Activated T-helper 1 cell treated with anti-CD3 and anti-CD28 coated beads, Interleukin-12 subunit alpha, Interleukin-12 subunit beta, Interleukin-2, Interleukin-4 antibody, amounts not matched to agents 30 ng/mL and 10 ng/mL and 1 ng/mL, durations not matched to agents 14 hours and 24 hours and 36 hours (primary cell): ENCODE measurements at regions of chr1 and their contacts with region 1.

Region 1: GRCh38 chr1:110338886-110339406 is at the start of gene RBM15:
- DNase-seq: peak; percentile 98
- H3K4me3 Mint-ChIP-seq: no peak within 1 kb of the TSS
- H3K27ac Mint-ChIP-seq: peak within 1 kb of the TSS; percentile 98
- H3K4me1 Mint-ChIP-seq: peaks cover 54% of the 10 kb centered on the region
- H3K27me3 Mint-ChIP-seq: no peaks in the 10 kb centered on the region
- total RNA-seq, gene RBM15: 58.5 and 59.0 TPM in 2 replicates

Region 2: GRCh38 chr1:108691942-108692723 is 1646.8 kb before region 1 on chr1 and contains the start of gene PRPF38B:
- intact Hi-C with region 1: loop called (anchors 2 kb)
- DNase-seq: peak; percentile 92
- H3K4me3 Mint-ChIP-seq: peak within 1 kb of the TSS; percentile 100
- H3K27ac Mint-ChIP-seq: peak within 1 kb of the TSS; percentile 100
- H3K4me1 Mint-ChIP-seq: peaks cover 44% of the 10 kb centered on the region
- H3K27me3 Mint-ChIP-seq: peaks cover 9% of the 10 kb centered on the region
- total RNA-seq, gene PRPF38B: 94.4 and 99.8 TPM in 2 replicates

Region 3: DNA sequence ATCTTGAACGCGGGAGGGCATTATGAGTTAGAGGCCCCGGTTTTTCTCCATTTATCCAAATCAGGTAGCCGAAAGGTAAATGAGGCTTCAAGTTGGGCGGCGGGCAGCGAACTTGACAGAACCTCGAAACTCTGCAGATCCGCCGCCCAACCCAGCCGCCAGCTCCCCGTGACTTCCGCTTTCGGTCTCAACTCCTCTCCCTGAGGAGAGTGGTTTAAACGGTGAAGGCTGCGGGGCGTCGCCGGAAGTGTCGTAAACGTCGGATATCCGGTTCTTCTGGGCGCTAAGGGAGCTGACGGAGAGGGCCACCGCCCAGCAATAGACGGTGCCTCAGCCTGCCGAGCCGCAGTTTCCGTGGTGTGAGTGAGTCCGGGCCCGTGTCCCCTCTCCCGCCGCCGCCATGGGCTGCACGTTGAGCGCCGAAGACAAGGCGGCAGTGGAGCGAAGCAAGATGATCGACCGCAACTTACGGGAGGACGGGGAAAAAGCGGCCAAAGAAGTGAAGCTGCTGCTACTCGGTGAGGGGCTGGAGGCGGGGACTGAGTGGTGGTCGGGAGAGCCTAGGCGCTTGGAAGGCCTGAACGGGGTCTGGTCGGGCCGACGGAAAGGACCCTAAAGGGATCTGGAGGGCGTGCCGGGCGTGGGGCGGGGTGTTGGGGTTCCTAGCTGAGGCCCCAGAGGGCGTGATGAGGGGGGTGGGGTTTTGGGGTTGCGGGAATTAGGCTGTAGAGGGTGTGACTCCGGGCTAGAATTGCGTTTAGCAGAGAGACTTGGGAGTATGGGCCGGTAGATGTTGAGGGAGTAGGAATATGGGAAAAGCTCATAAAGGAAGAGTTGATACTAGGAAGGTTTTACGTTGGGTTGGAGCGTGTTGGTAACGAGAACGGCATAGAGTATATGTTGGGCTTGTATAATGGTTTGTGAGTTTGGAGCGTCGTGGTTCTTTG is 790.4 kb before region 1 on chr1 and contains the start of gene GNAI3:
- intact Hi-C with region 1: loop called (anchors 1 kb)
- DNase-seq: peak; percentile 96
- H3K4me3 Mint-ChIP-seq: peak within 1 kb of the TSS; percentile 94
- H3K27ac Mint-ChIP-seq: peak within 1 kb of the TSS; percentile 96
- H3K4me1 Mint-ChIP-seq: peaks cover 48% of the 10 kb centered on the region
- H3K27me3 Mint-ChIP-seq: no peaks in the 10 kb centered on the region
- total RNA-seq, gene GNAI3: 8.4 and 8.9 TPM in 2 replicates

Region 4: DNA sequence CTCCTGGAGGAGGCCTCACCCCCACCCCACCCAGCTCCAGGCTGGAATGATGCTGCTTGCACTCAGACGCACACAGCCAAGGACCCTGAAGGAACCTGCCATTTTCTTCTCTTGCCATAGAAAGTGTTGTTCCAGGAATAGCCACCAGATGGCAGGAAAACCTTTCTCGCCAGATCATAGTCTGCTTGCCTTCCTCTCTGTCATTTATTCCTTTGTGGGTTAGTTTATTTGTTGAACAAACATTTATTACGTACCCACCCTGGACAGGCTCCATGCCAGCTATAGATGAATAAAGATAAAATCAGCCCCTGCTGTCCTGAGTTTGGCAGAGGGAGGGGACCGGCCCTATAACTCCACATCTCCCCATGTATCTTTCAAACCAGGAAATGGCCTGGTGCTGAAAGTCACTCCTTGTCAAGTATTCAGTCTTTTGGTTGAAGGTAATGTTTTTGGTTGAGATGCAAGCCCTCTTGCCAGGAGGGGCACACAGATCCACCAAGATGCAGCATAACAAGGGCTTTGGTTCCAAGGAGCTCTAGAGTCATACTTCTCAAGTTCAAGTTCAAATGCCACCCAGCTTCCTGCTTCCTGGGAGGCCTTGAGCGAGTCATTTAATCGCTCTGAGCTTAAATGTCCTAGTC is 135.8 kb before region 1 on chr1:
- intact Hi-C with region 1: loop called (anchors 2 kb)
- DNase-seq: peak; percentile 67
- H3K4me3 Mint-ChIP-seq: no peak overlapping the region
- H3K27ac Mint-ChIP-seq: peak overlapping the region; percentile 88
- H3K4me1 Mint-ChIP-seq: peaks cover 15% of the 10 kb centered on the region
- H3K27me3 Mint-ChIP-seq: peaks cover 2% of the 10 kb centered on the region

Region 5: GRCh38 chr1:110407260-110408210 is 68.6 kb after region 1 on chr1 and contains the start of gene LAMTOR5:
- intact Hi-C with region 1: loop called (anchors 1 kb)
- DNase-seq: peak; percentile 90
- H3K4me3 Mint-ChIP-seq: peak within 1 kb of the TSS; percentile 100
- H3K27ac Mint-ChIP-seq: peak within 1 kb of the TSS; percentile 100
- H3K4me1 Mint-ChIP-seq: peaks cover 22% of the 10 kb centered on the region
- H3K27me3 Mint-ChIP-seq: no peaks in the 10 kb centered on the region
- total RNA-seq, gene LAMTOR5: 163 and 184 TPM in 2 replicates

Region 6: GRCh38 chr1:110674337-110675059 is 335.6 kb after region 1 on chr1 and contains the start of gene KCNA3:
- intact Hi-C with region 1: loop called (anchors 2 kb)
- DNase-seq: peak; percentile 68
- H3K4me3 Mint-ChIP-seq: peak within 1 kb of the TSS; percentile 100
- H3K27ac Mint-ChIP-seq: peak within 1 kb of the TSS; percentile 92
- H3K4me1 Mint-ChIP-seq: peaks cover 67% of the 10 kb centered on the region
- H3K27me3 Mint-ChIP-seq: no peaks in the 10 kb centered on the region
- total RNA-seq, gene KCNA3: 38.1 and 42.2 TPM in 2 replicates

Region 7: DNA sequence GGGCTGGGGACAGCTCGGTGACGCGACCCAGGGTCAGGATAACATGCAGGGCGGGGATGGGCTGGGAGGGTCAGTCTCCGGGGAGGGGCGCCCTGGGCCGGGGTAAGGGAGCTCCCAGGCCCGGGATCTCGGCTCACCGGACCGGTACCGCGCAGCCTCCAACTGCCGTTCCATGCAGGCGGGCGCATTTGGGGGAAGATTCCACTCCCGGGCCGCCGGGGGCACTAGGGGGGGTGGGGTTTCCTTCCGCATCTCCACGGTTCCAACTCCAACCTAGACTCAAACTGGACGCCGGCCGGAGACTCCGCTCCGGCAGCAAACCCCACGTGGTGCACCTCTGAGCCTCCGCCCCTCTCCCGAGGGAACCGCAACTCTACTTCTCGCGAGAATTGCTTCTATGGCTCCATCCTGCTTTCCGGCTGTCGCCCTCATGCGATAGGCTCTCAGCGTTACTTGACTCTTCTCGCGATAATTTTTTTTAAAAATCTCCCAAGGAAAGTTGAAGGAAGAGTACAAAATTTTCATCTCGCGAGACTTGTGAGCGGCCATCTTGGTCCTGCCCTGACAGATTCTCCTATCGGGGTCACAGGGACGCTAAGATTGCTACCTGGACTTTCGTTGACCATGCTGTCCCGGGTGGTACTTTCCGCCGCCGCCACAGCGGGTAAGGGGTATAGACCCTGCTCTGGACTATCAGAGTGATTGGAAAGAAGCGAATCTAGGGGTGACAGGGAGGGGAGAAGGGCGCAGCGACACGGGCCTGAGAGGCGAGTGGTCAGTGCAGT is 1110.2 kb after region 1 on chr1 and contains the starts of genes ATP5PB and WDR77:
- intact Hi-C with region 1: loop called (anchors 1 kb)
- DNase-seq: peak; percentile 91
- H3K4me3 Mint-ChIP-seq: peak within 1 kb of the TSS; percentile 100
- H3K27ac Mint-ChIP-seq: peak within 1 kb of the TSS; percentile 96
- H3K4me1 Mint-ChIP-seq: peaks cover 74% of the 10 kb centered on the region
- H3K27me3 Mint-ChIP-seq: no peaks in the 10 kb centered on the region
- total RNA-seq, gene ATP5PB: 280 and 282 TPM in 2 replicates
- total RNA-seq, gene WDR77: 61.3 and 62.5 TPM in 2 replicates